Heart left ventricle (tissue), 16 donors: ENCODE measurements at regions of chr2 and their contacts with region 1.

Region 1: DNA sequence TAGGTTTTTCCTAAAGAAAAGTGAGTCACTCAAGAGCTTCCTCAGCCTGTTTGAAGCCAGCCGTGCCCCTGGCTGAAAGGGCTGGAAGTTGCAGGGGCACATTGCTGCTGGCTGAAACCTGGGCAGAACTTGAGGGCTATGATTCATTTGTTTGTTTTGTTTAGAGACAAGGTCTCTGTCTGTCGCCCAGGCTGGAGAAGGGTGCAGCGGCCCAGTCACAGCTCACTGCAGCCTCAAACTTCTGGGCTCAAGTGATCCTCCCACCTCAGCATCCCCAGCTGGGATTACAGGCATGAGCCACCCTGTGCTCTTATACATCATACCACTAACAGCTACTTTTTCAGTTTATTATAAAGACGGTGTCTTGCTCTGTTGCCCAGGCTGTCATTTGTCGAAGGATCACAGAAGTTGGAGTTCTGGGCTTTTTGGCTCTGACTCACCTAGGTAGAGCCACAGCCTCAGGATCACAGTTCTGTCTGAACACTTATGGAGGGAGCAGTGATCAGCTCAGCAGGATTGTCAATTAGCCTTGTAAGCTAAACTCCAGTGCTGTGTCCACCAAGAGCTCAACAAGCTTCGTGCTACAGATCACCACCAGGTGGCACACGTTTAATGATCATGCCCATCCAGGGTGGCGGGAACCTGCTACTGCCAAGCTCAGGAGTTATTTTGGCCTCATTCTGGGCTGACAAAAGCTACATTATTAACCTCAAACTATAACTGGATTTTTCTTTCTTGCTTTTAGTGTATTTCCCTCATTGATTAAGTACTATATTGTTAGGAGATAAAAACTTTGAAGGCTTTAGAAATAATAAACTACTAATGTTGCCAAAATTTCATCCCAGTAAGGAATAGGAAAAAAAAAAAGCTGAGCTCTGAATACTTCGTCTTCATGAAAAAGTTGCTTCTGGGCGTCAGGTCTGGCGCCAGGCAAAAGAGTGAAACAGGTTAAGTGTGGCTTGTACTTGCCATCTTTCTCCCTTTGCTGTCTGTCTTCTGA is 57.9 kb downstream of the ARHGEF33 start:
- DNase-seq: peak; percentile 47 to 72 (median 58)
- ATAC-seq: peak in 3 of 4 donors; percentile 74 to 77 (median 76)
- H3K4me3 ChIP-seq: no peak overlapping the region
- H3K27ac ChIP-seq: no peak overlapping the region
- H3K4me1 ChIP-seq: peaks cover 0 to 4% (median 0%) of the 10 kb centered on the region in 12 donors
- H3K27me3 ChIP-seq: no peaks in the 10 kb centered on the region
- CTCF ChIP-seq: peak; percentile 45 to 74 (median 62)
- POLR2A ChIP-seq: no peak

Region 2: DNA sequence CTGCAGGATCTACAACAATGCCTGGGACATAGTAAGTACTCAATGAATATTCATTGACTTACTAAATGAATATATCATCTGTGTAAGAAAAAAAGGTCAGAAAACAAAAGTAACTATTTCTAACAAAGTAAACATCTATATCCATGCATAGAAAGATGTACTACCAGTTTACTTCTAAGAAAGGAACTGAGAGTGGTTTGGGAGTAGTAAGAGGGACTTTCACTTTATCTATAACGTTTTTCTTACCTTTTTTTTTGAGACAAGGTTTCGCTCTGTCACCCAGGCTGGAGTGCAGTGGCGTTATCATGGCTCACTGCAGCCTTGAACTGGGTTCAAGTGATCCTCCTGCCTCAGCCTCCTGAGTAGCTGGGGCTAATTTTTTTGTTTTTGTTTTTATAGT is 97.5 kb before region 1 on chr2:
- intact Hi-C with region 1: no loop called
- DNase-seq: no peak
- ATAC-seq: no peak
- H3K4me3 ChIP-seq: no peak overlapping the region
- H3K27ac ChIP-seq: no peak overlapping the region
- H3K4me1 ChIP-seq: no peaks in the 10 kb centered on the region
- H3K27me3 ChIP-seq: no peaks in the 10 kb centered on the region
- CTCF ChIP-seq: no peak
- POLR2A ChIP-seq: no peak

Region 3: DNA sequence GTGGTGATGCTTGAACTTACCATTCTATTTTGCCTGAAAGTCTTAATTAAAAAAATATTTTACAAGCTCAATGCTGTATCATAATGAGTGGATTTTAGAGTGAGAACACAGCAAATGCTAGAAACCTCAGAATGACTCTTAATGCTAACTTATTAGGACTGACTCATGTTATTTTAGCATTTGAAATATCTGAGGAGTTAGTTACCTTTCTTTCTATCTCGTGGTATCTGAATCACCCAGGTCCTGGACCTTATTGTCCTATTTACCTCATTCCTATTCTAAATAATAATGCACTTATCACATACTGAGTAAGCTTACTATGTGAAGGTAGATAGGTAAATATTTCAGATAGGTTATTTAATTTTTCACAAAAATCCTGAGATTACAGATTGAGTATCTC is 102.6 kb after region 1 on chr2:
- intact Hi-C with region 1: loop called in 1 of 10 experiments (anchors 10 kb)
- DNase-seq: no peak
- ATAC-seq: no peak
- H3K4me3 ChIP-seq: no peak overlapping the region
- H3K27ac ChIP-seq: no peak overlapping the region
- H3K4me1 ChIP-seq: no peaks in the 10 kb centered on the region
- H3K27me3 ChIP-seq: no peaks in the 10 kb centered on the region
- CTCF ChIP-seq: no peak
- POLR2A ChIP-seq: no peak

Region 4: GRCh38 chr2:39234754-39235153 is 287.2 kb after region 1 on chr2:
- intact Hi-C with region 1: loop called (anchors 2 to 10 kb)
- DNase-seq: no peak
- ATAC-seq: no peak
- H3K4me3 ChIP-seq: no peak overlapping the region
- H3K27ac ChIP-seq: no peak overlapping the region
- H3K4me1 ChIP-seq: peaks cover 0 to 8% (median 0%) of the 10 kb centered on the region in 12 donors
- H3K27me3 ChIP-seq: no peaks in the 10 kb centered on the region
- CTCF ChIP-seq: no peak
- POLR2A ChIP-seq: no peak